ENCODE measurements at regions of chr7 and their contacts with region 1.

Region 1: GRCh38 chr7:73726083-73726466 is 6.6 kb upstream of the STX1A start:
- DNase-seq: no peak
- H3K4me3 Mint-ChIP-seq: no peak overlapping the region
- H3K27ac Mint-ChIP-seq: no peak overlapping the region
- H3K4me1 Mint-ChIP-seq: no peaks in the 10 kb centered on the region
- H3K27me3 Mint-ChIP-seq: peaks cover 18% of the 10 kb centered on the region

Region 2: DNA sequence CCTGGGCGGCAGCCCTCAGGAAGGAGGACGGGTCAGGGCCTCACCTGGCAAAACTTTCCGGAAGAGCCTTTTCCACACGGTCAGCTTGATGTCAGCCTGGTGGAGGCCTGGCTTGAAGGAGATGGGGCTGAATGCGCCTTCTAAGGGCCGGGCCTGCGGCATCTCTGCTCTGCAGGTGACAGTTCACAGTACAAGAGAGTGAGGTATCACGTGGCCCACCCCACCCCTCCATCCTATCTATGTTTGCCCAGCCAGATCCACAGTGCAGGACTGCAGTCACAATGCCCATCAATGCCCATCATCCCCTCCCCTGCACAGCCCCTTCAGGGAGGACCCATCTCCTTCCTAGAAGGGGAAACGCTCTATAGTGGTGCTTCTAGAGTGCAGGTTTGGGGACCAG is 409.6 kb before region 1 on chr7:
- intact Hi-C with region 1: loop called (anchors 5 kb)
- DNase-seq: no peak
- H3K4me3 Mint-ChIP-seq: no peak overlapping the region
- H3K27ac Mint-ChIP-seq: no peak overlapping the region
- H3K4me1 Mint-ChIP-seq: no peaks in the 10 kb centered on the region
- H3K27me3 Mint-ChIP-seq: no peaks in the 10 kb centered on the region

Region 3: GRCh38 chr7:73433924-73434700 is 292.0 kb before region 1 on chr7:
- intact Hi-C with region 1: no loop called
- DNase-seq: peak; percentile 2
- H3K4me3 Mint-ChIP-seq: peak overlapping the region; percentile 77
- H3K27ac Mint-ChIP-seq: no peak overlapping the region
- H3K4me1 Mint-ChIP-seq: no peaks in the 10 kb centered on the region
- H3K27me3 Mint-ChIP-seq: peaks cover 7% of the 10 kb centered on the region

Region 4: GRCh38 chr7:73799267-73800141 is 73.4 kb after region 1 on chr7:
- intact Hi-C with region 1: no loop called
- DNase-seq: no peak
- H3K4me3 Mint-ChIP-seq: no peak overlapping the region
- H3K27ac Mint-ChIP-seq: no peak overlapping the region
- H3K4me1 Mint-ChIP-seq: no peaks in the 10 kb centered on the region
- H3K27me3 Mint-ChIP-seq: no peaks in the 10 kb centered on the region